T-cell (primary cell): ENCODE measurements at regions of chr7 and their contacts with region 1.

Region 1: GRCh38 chr7:133819695-133820094 is 307.4 kb upstream of the LRGUK start:
- DNase-seq: no peak
- ATAC-seq: no peak
- H3K4me3 ChIP-seq: no peak overlapping the region
- H3K4me3 Mint-ChIP-seq: no peak overlapping the region
- H3K27ac ChIP-seq: no peak overlapping the region
- H3K27ac Mint-ChIP-seq: no peak overlapping the region
- H3K4me1 ChIP-seq: no peaks in the 10 kb centered on the region
- H3K4me1 Mint-ChIP-seq: peaks cover 3 to 13% (median 8%) of the 10 kb centered on the region in 3 donors
- H3K27me3 ChIP-seq: no peaks in the 10 kb centered on the region
- H3K27me3 Mint-ChIP-seq: no peaks in the 10 kb centered on the region

Region 2: GRCh38 chr7:133491846-133492652 is 327.6 kb before region 1 on chr7:
- CTCF ChIA-PET with region 1: interaction called in 1 of 2 experiments, 10 read pairs
- POLR2A ChIA-PET with region 1: no interaction called
- DNase-seq: no peak
- ATAC-seq: no peak
- H3K4me3 ChIP-seq: no peak overlapping the region
- H3K4me3 Mint-ChIP-seq: no peak overlapping the region
- H3K27ac ChIP-seq: no peak overlapping the region
- H3K27ac Mint-ChIP-seq: no peak overlapping the region
- H3K4me1 ChIP-seq: no peaks in the 10 kb centered on the region
- H3K4me1 Mint-ChIP-seq: peaks cover 0 to 12% (median 9%) of the 10 kb centered on the region in 3 donors
- H3K27me3 ChIP-seq: no peaks in the 10 kb centered on the region
- H3K27me3 Mint-ChIP-seq: no peaks in the 10 kb centered on the region

Region 3: DNA sequence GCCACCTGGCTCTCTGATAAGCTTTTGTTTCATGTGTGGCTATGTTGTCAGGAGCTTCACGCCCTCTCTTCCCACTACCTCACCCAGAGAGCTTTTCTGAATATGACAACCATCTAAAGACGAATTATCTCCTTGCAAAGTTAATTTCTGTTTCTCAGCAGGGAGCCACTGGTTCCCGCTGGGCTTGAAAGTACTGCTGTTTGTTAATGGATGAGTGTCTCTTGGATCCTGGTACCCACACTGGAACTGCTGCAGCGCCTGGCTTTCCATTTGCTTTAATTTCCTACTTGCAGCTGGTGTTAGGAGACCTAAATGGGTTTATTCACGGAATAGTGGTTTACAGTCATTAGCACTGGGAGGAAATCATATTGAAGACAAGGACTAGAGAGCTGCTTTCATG is 39.5 kb after region 1 on chr7:
- CTCF ChIA-PET with region 1: no interaction called
- POLR2A ChIA-PET with region 1: interaction called in 1 of 2 experiments, 12 read pairs
- DNase-seq: no peak
- ATAC-seq: no peak
- H3K4me3 ChIP-seq: no peak overlapping the region
- H3K4me3 Mint-ChIP-seq: no peak overlapping the region
- H3K27ac ChIP-seq: no peak overlapping the region
- H3K27ac Mint-ChIP-seq: no peak overlapping the region
- H3K4me1 ChIP-seq: no peaks in the 10 kb centered on the region
- H3K4me1 Mint-ChIP-seq: no peaks in the 10 kb centered on the region
- H3K27me3 ChIP-seq: no peaks in the 10 kb centered on the region
- H3K27me3 Mint-ChIP-seq: no peaks in the 10 kb centered on the region